PC-9 (cell line): ENCODE measurements at regions of chr6 and their contacts with region 1.

Region 1: GRCh38 chr6:162262466-162263196 is 464.9 kb downstream of the PRKN start:
- DNase-seq: no peak
- H3K4me3 ChIP-seq: no peak overlapping the region
- H3K27ac ChIP-seq: no peak overlapping the region
- H3K4me1 ChIP-seq: no peaks in the 10 kb centered on the region
- H3K27me3 ChIP-seq: peaks cover 42% of the 10 kb centered on the region
- CTCF ChIP-seq: no peak

Region 2: GRCh38 chr6:161792851-161793493 is 469.7 kb before region 1 on chr6:
- CTCF ChIA-PET with region 1: no interaction called
- POLR2A ChIA-PET with region 1: no interaction called
- intact Hi-C with region 1: no loop called
- DNase-seq: no peak
- H3K4me3 ChIP-seq: no peak overlapping the region
- H3K27ac ChIP-seq: no peak overlapping the region
- H3K4me1 ChIP-seq: no peaks in the 10 kb centered on the region
- H3K27me3 ChIP-seq: peaks cover 6% of the 10 kb centered on the region
- CTCF ChIP-seq: no peak

Region 3: GRCh38 chr6:162429974-162430373 is 167.3 kb after region 1 on chr6:
- CTCF ChIA-PET with region 1: no interaction called
- POLR2A ChIA-PET with region 1: interaction called, 10 read pairs
- intact Hi-C with region 1: no loop called
- DNase-seq: no peak
- H3K4me3 ChIP-seq: no peak overlapping the region
- H3K27ac ChIP-seq: no peak overlapping the region
- H3K4me1 ChIP-seq: no peaks in the 10 kb centered on the region
- H3K27me3 ChIP-seq: 0 out of 2 replicates have a peak, but pooled peaks cover 8% of the 10 kb centered on the region
- CTCF ChIP-seq: no peak